ENCODE measurements at regions of chr2 and their contacts with region 1.

Region 1: DNA sequence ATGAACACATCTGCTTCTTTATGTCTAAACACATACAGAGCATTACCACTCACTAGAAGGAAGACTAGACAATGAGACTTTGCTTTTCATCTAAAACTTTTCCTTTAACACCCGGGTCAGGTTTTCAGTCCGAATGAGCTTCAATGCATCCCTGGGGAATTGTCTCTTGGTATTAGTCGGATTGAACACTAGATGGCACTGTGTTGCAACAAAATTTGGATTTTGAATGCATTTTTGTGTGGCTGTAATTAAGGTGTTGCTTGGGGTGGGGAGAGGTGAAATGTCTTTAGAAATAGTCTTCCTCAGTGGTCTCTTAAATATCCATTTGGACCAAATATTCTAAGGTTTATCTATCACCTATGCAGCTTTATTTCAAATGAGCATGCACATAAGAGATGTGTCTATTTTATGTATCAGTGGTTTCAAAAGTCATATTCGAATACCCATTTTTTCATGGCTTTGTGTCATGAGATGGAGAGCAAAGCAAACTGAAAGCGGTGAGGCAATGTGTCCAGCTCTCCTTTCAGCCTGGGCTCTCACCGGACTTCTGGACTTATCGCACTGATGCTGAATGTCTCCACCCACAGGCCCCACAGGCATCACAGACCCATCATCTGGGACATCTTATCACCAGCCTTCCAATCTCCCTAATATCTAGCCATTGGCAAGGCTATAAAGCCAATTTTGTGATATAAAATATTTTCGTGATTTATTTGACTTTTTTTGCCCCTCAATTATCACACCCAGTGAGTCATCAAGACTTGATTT is 510.3 kb downstream of the RNF144A start:
- DNase-seq: peak in 7 of 9 donors; percentile 37 to 73 (median 63)
- ATAC-seq: peak; percentile 70
- H3K4me3 ChIP-seq: no peak overlapping the region
- H3K4me3 Mint-ChIP-seq: peak overlapping the region in 6 of 10 donors; percentile 0 to 87 (median 38)
- H3K27ac ChIP-seq: no peak overlapping the region
- H3K27ac Mint-ChIP-seq: peak overlapping the region in 7 of 9 donors; percentile 3 to 98 (median 78)
- H3K4me1 ChIP-seq: peaks cover 0 to 29% of the 10 kb centered on the region in 2 donors
- H3K4me1 Mint-ChIP-seq: peaks cover 26 to 49% (median 46%) of the 10 kb centered on the region in 7 donors
- H3K27me3 ChIP-seq: no peaks in the 10 kb centered on the region
- H3K27me3 Mint-ChIP-seq: peaks cover 0 to 6% (median 3%) of the 10 kb centered on the region in 5 donors

Region 2: GRCh38 chr2:7097348-7097895 is 330.1 kb before region 1 on chr2:
- CTCF ChIA-PET with region 1: interaction called, 3 read pairs
- POLR2A ChIA-PET with region 1: no interaction called
- intact Hi-C with region 1: loop called in 1 of 2 experiments (anchors 1 kb)
- DNase-seq: peak; percentile 47 to 77 (median 72)
- ATAC-seq: peak; percentile 92
- H3K4me3 ChIP-seq: peak overlapping the region; percentile 56
- H3K4me3 Mint-ChIP-seq: peak overlapping the region; percentile 56 to 82 (median 76)
- H3K27ac ChIP-seq: no peak overlapping the region
- H3K27ac Mint-ChIP-seq: peak overlapping the region in 5 of 9 donors; percentile 22 to 86 (median 45)
- H3K4me1 ChIP-seq: peaks cover 0 to 7% of the 10 kb centered on the region in 2 donors
- H3K4me1 Mint-ChIP-seq: peaks cover 6 to 8% (median 8%) of the 10 kb centered on the region in 7 donors
- H3K27me3 ChIP-seq: no peaks in the 10 kb centered on the region
- H3K27me3 Mint-ChIP-seq: no peaks in the 10 kb centered on the region

Region 3: DNA sequence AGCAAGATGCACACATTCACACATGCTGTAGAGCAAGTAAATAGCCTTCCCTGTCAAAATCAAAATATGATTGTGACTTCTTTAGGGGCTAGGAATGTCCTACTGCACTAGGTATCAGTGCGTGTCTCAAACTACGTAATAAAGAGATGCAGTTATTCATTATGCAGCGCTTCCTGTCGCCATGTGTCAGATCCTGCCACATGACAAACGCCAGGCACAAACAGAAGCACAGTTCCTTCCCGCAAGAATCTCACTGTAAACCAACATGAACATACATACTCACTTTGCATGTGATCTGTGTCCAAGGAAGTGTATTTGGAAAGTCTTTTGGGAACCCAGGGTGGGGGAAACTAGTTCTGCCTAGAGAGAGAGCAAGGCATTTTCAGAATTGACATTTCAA is 89.6 kb after region 1 on chr2:
- CTCF ChIA-PET with region 1: interaction called, 3 read pairs
- POLR2A ChIA-PET with region 1: no interaction called
- intact Hi-C with region 1: loop called (anchors 5 kb)
- DNase-seq: peak in 7 of 9 donors; percentile 28 to 63 (median 49)
- ATAC-seq: peak; percentile 89
- H3K4me3 ChIP-seq: peak overlapping the region; percentile 12
- H3K4me3 Mint-ChIP-seq: peak overlapping the region; percentile 20 to 82 (median 77)
- H3K27ac ChIP-seq: peak overlapping the region; percentile 35
- H3K27ac Mint-ChIP-seq: peak overlapping the region; percentile 71 to 97 (median 88)
- H3K4me1 ChIP-seq: peaks cover 0 to 16% of the 10 kb centered on the region in 2 donors
- H3K4me1 Mint-ChIP-seq: peaks cover 13 to 68% (median 51%) of the 10 kb centered on the region in 7 donors
- H3K27me3 ChIP-seq: no peaks in the 10 kb centered on the region
- H3K27me3 Mint-ChIP-seq: no peaks in the 10 kb centered on the region

Region 4: DNA sequence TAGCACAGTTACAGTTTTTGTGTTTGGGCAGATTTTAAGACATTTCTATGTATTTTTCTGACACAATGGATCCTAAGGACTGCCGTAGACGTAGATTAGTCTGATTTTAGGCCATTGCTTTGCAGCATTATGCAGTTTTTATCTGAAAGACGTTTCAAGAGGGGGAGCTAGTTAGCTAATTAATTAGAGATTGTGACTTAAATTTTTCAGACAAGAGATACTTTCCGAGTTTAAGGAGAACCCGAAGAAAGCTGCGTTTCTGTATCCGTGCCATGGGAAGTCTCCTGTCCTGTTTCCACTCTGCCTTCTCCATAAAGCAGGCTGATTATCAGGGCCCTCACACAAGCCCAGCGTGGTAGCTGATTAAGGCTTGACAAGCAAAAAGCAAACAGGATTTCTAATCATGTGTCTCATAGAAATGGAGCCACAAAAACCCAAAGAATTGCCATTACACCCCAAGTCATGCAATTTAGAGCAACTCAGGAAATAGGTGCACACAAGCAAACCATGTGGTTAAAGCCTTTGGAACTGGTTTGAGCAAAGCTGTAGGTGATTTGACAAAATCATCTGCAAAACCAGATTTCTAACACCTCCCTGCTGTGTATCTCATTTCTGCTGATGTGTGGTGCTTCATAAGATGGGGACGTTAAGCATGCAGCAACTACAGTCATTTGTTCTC is 297.8 kb after region 1 on chr2:
- CTCF ChIA-PET with region 1: interaction called, 11 read pairs
- POLR2A ChIA-PET with region 1: no interaction called
- intact Hi-C with region 1: loop called (anchors 1 to 5 kb)
- DNase-seq: peak in 5 of 9 donors; percentile 17 to 51 (median 38)
- ATAC-seq: peak; percentile 78
- H3K4me3 ChIP-seq: peak overlapping the region; percentile 25
- H3K4me3 Mint-ChIP-seq: peak overlapping the region in 9 of 10 donors; percentile 26 to 86 (median 58)
- H3K27ac ChIP-seq: no peak overlapping the region
- H3K27ac Mint-ChIP-seq: peak overlapping the region; percentile 8 to 89 (median 65)
- H3K4me1 ChIP-seq: peaks cover 17 to 34% of the 10 kb centered on the region in 2 donors
- H3K4me1 Mint-ChIP-seq: peaks cover 13 to 63% (median 34%) of the 10 kb centered on the region in 7 donors
- H3K27me3 ChIP-seq: no peaks in the 10 kb centered on the region
- H3K27me3 Mint-ChIP-seq: no peaks in the 10 kb centered on the region

Region 5: DNA sequence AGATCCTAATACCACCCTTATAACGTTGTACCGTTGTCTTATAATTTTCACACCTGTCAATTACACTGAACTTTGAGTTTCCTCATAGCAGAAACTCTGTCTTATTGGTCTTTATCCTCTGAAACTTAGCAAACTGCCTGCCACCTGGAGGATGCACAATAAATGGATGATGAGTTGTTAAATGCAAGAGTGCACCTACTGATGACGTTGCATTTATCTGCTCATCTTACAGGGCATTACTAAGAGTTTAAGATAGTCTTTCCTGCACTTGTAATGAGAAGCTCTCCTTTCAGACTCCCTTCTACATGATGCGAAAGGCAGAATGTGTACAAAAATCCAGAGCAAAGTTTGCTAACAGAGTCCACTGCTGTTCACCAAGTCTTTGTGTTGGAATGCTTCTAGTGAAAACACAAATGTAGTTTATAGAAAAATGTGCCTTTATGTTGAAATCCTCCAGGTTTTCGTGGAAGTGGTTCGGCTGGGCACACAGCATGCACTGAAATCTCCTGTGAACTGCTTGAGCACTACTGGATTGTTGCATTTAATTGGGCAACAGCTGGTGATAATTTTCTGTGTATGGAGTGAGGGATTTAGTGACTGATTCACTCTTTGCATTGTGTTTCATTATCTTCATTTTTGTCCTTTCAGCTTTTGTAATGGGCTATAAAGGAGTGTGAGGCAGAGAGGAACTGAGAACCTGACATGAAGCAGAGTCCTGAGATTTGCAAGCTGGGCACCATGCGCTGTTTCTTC is 588.5 kb after region 1 on chr2:
- CTCF ChIA-PET with region 1: interaction called, 5 read pairs
- POLR2A ChIA-PET with region 1: no interaction called
- intact Hi-C with region 1: loop called in 1 of 2 experiments (anchors 5 kb)
- DNase-seq: no peak
- ATAC-seq: no peak
- H3K4me3 ChIP-seq: no peak overlapping the region
- H3K4me3 Mint-ChIP-seq: no peak overlapping the region
- H3K27ac ChIP-seq: no peak overlapping the region
- H3K27ac Mint-ChIP-seq: no peak overlapping the region
- H3K4me1 ChIP-seq: no peaks in the 10 kb centered on the region
- H3K4me1 Mint-ChIP-seq: no peaks in the 10 kb centered on the region
- H3K27me3 ChIP-seq: no peaks in the 10 kb centered on the region
- H3K27me3 Mint-ChIP-seq: no peaks in the 10 kb centered on the region

Region 6: GRCh38 chr2:8544786-8545694 is 1117.6 kb after region 1 on chr2:
- CTCF ChIA-PET with region 1: no interaction called
- POLR2A ChIA-PET with region 1: no interaction called
- intact Hi-C with region 1: loop called in 1 of 2 experiments (anchors 1 kb)
- DNase-seq: peak in 8 of 9 donors; percentile 10 to 85 (median 32)
- ATAC-seq: peak; percentile 82
- H3K4me3 ChIP-seq: peak overlapping the region; percentile 17
- H3K4me3 Mint-ChIP-seq: peak overlapping the region in 7 of 10 donors; percentile 2 to 64 (median 23)
- H3K27ac ChIP-seq: no peak overlapping the region
- H3K27ac Mint-ChIP-seq: peak overlapping the region in 4 of 9 donors; percentile 43 to 97 (median 60)
- H3K4me1 ChIP-seq: peaks cover 10 to 57% of the 10 kb centered on the region in 2 donors
- H3K4me1 Mint-ChIP-seq: peaks cover 32 to 84% (median 42%) of the 10 kb centered on the region in 7 donors
- H3K27me3 ChIP-seq: no peaks in the 10 kb centered on the region
- H3K27me3 Mint-ChIP-seq: no peaks in the 10 kb centered on the region